Sciatic nerve (tissue), 2 donors: ENCODE measurements at regions of chr5 and their contacts with region 1.

Region 1: GRCh38 chr5:32935292-32935691 is 224.2 kb downstream of the NPR3 start:
- DNase-seq: no peak
- ATAC-seq: no peak

Region 2: GRCh38 chr5:32329308-32329834 is 605.9 kb before region 1 on chr5:
- intact Hi-C with region 1: no loop called
- DNase-seq: peak; percentile 71
- ATAC-seq: peak; percentile 93

Region 3: GRCh38 chr5:32964261-32964660 is 29.0 kb after region 1 on chr5:
- intact Hi-C with region 1: loop called (anchors 2 kb)
- DNase-seq: no peak
- ATAC-seq: no peak